ENCODE measurements at regions of chr19 and their contacts with region 1.

Region 1: GRCh38 chr19:44770550-44771257 is 7.0 kb upstream of the CBLC start:
- DNase-seq: peak; percentile 99
- H3K4me3 Mint-ChIP-seq: peak overlapping the region; percentile 65
- H3K27ac Mint-ChIP-seq: peak overlapping the region; percentile 86
- H3K4me1 Mint-ChIP-seq: peaks cover 29% of the 10 kb centered on the region
- H3K27me3 Mint-ChIP-seq: no peaks in the 10 kb centered on the region

Region 2: GRCh38 chr19:44576843-44577565 is 193.7 kb before region 1 on chr19:
- CTCF ChIA-PET with region 1: no interaction called
- intact Hi-C with region 1: loop called (anchors 2 kb)
- DNase-seq: peak; percentile 62
- H3K4me3 Mint-ChIP-seq: no peak overlapping the region
- H3K27ac Mint-ChIP-seq: no peak overlapping the region
- H3K4me1 Mint-ChIP-seq: no peaks in the 10 kb centered on the region
- H3K27me3 Mint-ChIP-seq: no peaks in the 10 kb centered on the region

Region 3: GRCh38 chr19:44689056-44689895 is 81.4 kb before region 1 on chr19:
- CTCF ChIA-PET with region 1: interaction called, 75 read pairs
- intact Hi-C with region 1: loop called (anchors 1 kb)
- DNase-seq: peak; percentile 86
- H3K4me3 Mint-ChIP-seq: no peak overlapping the region
- H3K27ac Mint-ChIP-seq: no peak overlapping the region
- H3K4me1 Mint-ChIP-seq: peaks cover 42% of the 10 kb centered on the region
- H3K27me3 Mint-ChIP-seq: peaks cover 6% of the 10 kb centered on the region

Region 4: GRCh38 chr19:44746946-44747738 is 23.6 kb before region 1 on chr19:
- CTCF ChIA-PET with region 1: interaction called, 11 read pairs
- intact Hi-C with region 1: loop called (anchors 1 kb)
- DNase-seq: peak; percentile 97
- H3K4me3 Mint-ChIP-seq: peak overlapping the region; percentile 87
- H3K27ac Mint-ChIP-seq: peak overlapping the region; percentile 95
- H3K4me1 Mint-ChIP-seq: peaks cover 56% of the 10 kb centered on the region
- H3K27me3 Mint-ChIP-seq: no peaks in the 10 kb centered on the region

Region 5: DNA sequence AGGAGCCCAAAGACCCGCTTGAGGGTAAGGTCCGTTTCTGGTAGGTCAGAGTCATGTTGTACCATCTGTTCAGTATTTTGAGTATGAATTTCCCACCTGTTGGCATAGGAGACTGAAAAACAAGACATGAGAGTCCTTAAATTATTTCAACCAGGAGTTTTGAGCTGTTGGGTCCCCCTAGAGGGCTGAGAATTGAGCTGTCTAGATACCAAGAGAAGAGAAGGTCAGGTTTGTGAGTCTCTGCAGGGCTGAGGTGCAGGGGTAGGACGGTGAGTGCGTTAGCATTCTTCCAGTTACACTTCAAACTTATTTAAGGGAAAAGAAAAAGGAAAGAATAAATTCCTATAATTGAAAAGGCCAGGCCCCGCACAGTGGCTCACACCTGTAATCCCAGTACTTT is 12.0 kb after region 1 on chr19:
- CTCF ChIA-PET with region 1: interaction called, 23 read pairs
- intact Hi-C with region 1: no loop called
- DNase-seq: no peak
- H3K4me3 Mint-ChIP-seq: no peak overlapping the region
- H3K27ac Mint-ChIP-seq: no peak overlapping the region
- H3K4me1 Mint-ChIP-seq: peaks cover 4% of the 10 kb centered on the region
- H3K27me3 Mint-ChIP-seq: peaks cover 10% of the 10 kb centered on the region